CD4-positive, alpha-beta memory T cell (primary cell): ENCODE measurements at regions of chr11 and their contacts with region 1.

Region 1: GRCh38 chr11:119284344-119285157 is 32.4 kb downstream of the MCAM start:
- DNase-seq: peak in 4 of 5 donors; percentile 62 to 64 (median 62)
- H3K4me3 ChIP-seq: no peak overlapping the region
- H3K4me3 Mint-ChIP-seq: peak overlapping the region in 1 of 8 donors; percentile 20
- H3K27ac ChIP-seq: no peak overlapping the region
- H3K27ac Mint-ChIP-seq: peak overlapping the region in 6 of 7 donors; percentile 30 to 87 (median 76)
- H3K4me1 ChIP-seq: peaks cover 9% of the 10 kb centered on the region
- H3K4me1 Mint-ChIP-seq: peaks cover 17 to 30% (median 21%) of the 10 kb centered on the region in 4 donors
- H3K27me3 ChIP-seq: no peaks in the 10 kb centered on the region
- H3K27me3 Mint-ChIP-seq: no peaks in the 10 kb centered on the region

Region 2: DNA sequence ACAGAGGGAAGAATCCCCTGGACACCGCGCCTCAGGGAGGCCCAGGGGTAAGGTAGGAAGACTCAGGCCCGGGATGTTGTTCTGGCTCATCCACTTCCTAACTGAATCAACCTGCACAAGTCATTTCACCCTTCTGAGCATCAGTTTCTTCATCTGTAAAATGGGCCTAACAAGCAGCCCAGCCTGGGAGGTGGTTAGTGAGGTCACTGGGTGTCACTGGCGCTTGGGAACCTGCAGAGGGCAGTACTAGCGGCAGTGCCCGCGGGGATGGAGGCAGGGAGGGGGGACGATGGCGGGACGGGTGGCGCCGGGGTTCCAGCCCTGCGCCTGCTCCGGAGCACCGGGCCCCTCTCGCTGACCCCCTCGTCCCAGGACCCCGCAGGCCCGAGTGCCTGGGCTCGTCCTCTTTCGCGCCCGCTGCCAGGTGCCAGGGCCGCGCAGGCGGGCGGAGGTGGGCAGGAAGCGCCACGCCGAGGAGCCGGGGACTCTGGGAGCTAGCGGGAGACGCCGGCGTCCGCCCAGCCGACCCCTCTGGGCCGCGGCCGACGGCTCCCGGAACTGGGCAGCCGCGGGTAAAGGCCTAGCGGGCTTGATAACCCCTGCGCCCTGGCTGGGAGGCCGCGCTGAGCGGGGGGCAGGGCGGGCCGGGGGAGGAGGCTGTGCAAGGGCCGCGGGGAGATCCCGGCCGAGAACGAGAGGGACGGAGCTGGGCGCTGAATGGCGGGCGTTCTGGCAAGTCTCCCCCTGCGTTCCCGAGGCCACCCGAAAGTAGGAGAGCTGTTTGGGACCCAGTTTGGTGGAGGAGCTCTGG is 115.9 kb before region 1 on chr11 and contains the start of gene NLRX1:
- CTCF ChIA-PET with region 1: interaction called, 9 read pairs
- POLR2A ChIA-PET with region 1: interaction called, 7 read pairs
- intact Hi-C with region 1: loop called (anchors 1 kb)
- DNase-seq: peak; percentile 81 to 83 (median 82)
- H3K4me3 ChIP-seq: peak within 1 kb of the TSS; percentile 78 to 79
- H3K4me3 Mint-ChIP-seq: peak within 1 kb of the TSS; percentile 89 to 91 (median 90)
- H3K27ac ChIP-seq: peak within 1 kb of the TSS; percentile 67
- H3K27ac Mint-ChIP-seq: peak within 1 kb of the TSS; percentile 68 to 90 (median 89)
- H3K4me1 ChIP-seq: peaks cover 6% of the 10 kb centered on the region
- H3K4me1 Mint-ChIP-seq: peaks cover 1 to 10% (median 8%) of the 10 kb centered on the region in 4 donors
- H3K27me3 ChIP-seq: no peaks in the 10 kb centered on the region
- H3K27me3 Mint-ChIP-seq: no peaks in the 10 kb centered on the region
- total RNA-seq, gene NLRX1: 8.8 to 9.2 TPM

Region 3: GRCh38 chr11:119205574-119206510 is 78.7 kb before region 1 on chr11 and contains the start of gene CBL:
- CTCF ChIA-PET with region 1: interaction called, 79 read pairs
- POLR2A ChIA-PET with region 1: interaction called, 44 read pairs
- intact Hi-C with region 1: loop called (anchors 1 kb)
- DNase-seq: peak; percentile 91 to 95 (median 92)
- H3K4me3 ChIP-seq: peak within 1 kb of the TSS; percentile 64 to 94
- H3K4me3 Mint-ChIP-seq: peak within 1 kb of the TSS; percentile 91 to 100 (median 96)
- H3K27ac ChIP-seq: peak within 1 kb of the TSS; percentile 77
- H3K27ac Mint-ChIP-seq: peak within 1 kb of the TSS; percentile 80 to 96 (median 94)
- H3K4me1 ChIP-seq: peaks cover 35% of the 10 kb centered on the region
- H3K4me1 Mint-ChIP-seq: peaks cover 15 to 54% (median 28%) of the 10 kb centered on the region in 4 donors
- H3K27me3 ChIP-seq: no peaks in the 10 kb centered on the region
- H3K27me3 Mint-ChIP-seq: no peaks in the 10 kb centered on the region
- total RNA-seq, gene CBL: 39.5 to 39.8 TPM

Region 4: GRCh38 chr11:119229288-119229672 is 55.3 kb before region 1 on chr11:
- CTCF ChIA-PET with region 1: interaction called, 16 read pairs
- POLR2A ChIA-PET with region 1: no interaction called
- intact Hi-C with region 1: no loop called
- DNase-seq: no peak
- H3K4me3 ChIP-seq: no peak overlapping the region
- H3K4me3 Mint-ChIP-seq: peak overlapping the region; percentile 3 to 86 (median 68)
- H3K27ac ChIP-seq: no peak overlapping the region
- H3K27ac Mint-ChIP-seq: peak overlapping the region; percentile 4 to 88 (median 70)
- H3K4me1 ChIP-seq: peaks cover 21% of the 10 kb centered on the region
- H3K4me1 Mint-ChIP-seq: peaks cover 35 to 71% (median 50%) of the 10 kb centered on the region in 4 donors
- H3K27me3 ChIP-seq: no peaks in the 10 kb centered on the region
- H3K27me3 Mint-ChIP-seq: no peaks in the 10 kb centered on the region

Region 5: DNA sequence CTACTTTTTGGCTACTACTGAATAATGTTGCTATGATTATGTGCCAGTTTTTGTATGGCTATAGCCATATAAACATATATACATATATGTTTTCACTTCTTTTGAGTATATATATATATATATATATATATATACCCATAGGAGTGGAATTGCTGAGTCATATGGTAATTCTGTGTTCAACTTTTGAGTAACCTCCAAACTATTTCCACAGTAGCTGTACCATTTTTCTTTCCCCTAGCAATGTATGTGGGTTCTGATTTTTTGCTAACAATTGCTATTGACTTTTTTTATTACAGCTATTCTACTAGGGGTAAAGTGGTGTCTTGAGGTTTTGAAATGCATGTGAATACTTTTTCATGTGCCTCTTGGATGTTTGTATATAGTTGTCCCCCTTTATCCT is 48.1 kb before region 1 on chr11:
- CTCF ChIA-PET with region 1: interaction called, 16 read pairs
- POLR2A ChIA-PET with region 1: interaction called, 3 read pairs
- intact Hi-C with region 1: loop called (anchors 5 kb)
- DNase-seq: no peak
- H3K4me3 ChIP-seq: no peak overlapping the region
- H3K4me3 Mint-ChIP-seq: no peak overlapping the region
- H3K27ac ChIP-seq: no peak overlapping the region
- H3K27ac Mint-ChIP-seq: peak overlapping the region in 2 of 7 donors; percentile 22 to 23
- H3K4me1 ChIP-seq: peaks cover 33% of the 10 kb centered on the region
- H3K4me1 Mint-ChIP-seq: peaks cover 30 to 54% (median 39%) of the 10 kb centered on the region in 4 donors
- H3K27me3 ChIP-seq: no peaks in the 10 kb centered on the region
- H3K27me3 Mint-ChIP-seq: no peaks in the 10 kb centered on the region

Region 6: DNA sequence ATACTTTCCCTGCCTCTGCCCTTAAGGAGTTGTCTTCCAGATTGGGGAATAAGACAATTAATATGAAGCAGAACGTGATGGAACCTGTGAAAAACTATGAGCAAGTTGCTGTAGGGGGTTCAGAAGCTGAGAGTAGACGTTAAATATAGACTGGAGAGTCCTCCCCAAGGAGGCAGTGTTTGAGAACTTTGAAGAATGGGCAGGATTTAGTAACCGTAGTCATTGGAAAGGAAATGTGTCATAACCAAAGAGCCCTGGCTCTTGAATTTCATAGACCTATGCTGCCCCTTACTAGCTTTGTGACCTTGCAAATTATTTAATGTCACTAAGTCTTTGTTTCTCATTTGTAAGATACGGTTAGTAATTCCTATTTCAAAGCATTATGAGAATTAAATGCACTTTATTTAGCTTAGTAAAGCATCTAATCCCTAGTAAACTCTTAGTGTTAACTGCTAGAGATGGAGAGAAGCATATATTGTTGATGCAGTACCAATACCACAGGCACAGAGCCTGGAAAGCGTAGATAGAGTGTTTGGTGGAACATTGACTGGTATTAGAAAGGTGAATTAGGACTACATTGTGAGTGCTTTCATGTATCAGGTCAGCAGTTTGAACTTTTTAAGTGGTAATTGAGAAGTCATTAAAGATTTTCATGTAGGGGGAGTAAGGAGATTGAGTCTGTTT is 21.7 kb before region 1 on chr11:
- CTCF ChIA-PET with region 1: interaction called, 67 read pairs
- POLR2A ChIA-PET with region 1: interaction called, 4 read pairs
- intact Hi-C with region 1: loop called (anchors 2 kb)
- DNase-seq: peak in 2 of 5 donors; percentile 9 to 21
- H3K4me3 ChIP-seq: peak overlapping the region in 1 of 2 donors; percentile 5
- H3K4me3 Mint-ChIP-seq: no peak overlapping the region
- H3K27ac ChIP-seq: peak overlapping the region; percentile 39
- H3K27ac Mint-ChIP-seq: no peak overlapping the region
- H3K4me1 ChIP-seq: peaks cover 94% of the 10 kb centered on the region
- H3K4me1 Mint-ChIP-seq: peaks cover 44 to 60% (median 49%) of the 10 kb centered on the region in 4 donors
- H3K27me3 ChIP-seq: no peaks in the 10 kb centered on the region
- H3K27me3 Mint-ChIP-seq: no peaks in the 10 kb centered on the region

Region 7: DNA sequence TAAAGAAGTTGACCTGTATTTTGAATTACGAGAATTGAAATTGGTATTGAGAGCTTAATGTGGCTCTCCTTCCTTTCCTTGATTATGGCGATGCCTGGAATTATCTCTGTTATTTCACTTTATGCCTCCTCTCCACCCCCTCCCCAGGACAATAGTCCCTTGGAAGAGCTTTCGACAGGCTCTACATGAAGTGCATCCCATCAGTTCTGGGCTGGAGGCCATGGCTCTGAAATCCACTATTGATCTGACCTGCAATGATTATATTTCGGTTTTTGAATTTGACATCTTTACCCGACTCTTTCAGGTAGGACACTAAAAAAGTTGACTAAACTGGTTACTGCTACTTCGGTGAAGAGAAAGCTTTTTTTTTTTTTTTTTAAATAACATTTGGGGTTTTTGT is 10.8 kb before region 1 on chr11:
- CTCF ChIA-PET with region 1: interaction called, 21 read pairs
- POLR2A ChIA-PET with region 1: interaction called, 4 read pairs
- intact Hi-C with region 1: no loop called
- DNase-seq: no peak
- H3K4me3 ChIP-seq: no peak overlapping the region
- H3K4me3 Mint-ChIP-seq: no peak overlapping the region
- H3K27ac ChIP-seq: no peak overlapping the region
- H3K27ac Mint-ChIP-seq: peak overlapping the region in 1 of 7 donors; percentile 50
- H3K4me1 ChIP-seq: no peaks in the 10 kb centered on the region
- H3K4me1 Mint-ChIP-seq: peaks cover 0 to 8% (median 4%) of the 10 kb centered on the region in 4 donors
- H3K27me3 ChIP-seq: no peaks in the 10 kb centered on the region
- H3K27me3 Mint-ChIP-seq: no peaks in the 10 kb centered on the region